ENCODE measurements at regions of chrX and their contacts with region 1.

Region 1: DNA sequence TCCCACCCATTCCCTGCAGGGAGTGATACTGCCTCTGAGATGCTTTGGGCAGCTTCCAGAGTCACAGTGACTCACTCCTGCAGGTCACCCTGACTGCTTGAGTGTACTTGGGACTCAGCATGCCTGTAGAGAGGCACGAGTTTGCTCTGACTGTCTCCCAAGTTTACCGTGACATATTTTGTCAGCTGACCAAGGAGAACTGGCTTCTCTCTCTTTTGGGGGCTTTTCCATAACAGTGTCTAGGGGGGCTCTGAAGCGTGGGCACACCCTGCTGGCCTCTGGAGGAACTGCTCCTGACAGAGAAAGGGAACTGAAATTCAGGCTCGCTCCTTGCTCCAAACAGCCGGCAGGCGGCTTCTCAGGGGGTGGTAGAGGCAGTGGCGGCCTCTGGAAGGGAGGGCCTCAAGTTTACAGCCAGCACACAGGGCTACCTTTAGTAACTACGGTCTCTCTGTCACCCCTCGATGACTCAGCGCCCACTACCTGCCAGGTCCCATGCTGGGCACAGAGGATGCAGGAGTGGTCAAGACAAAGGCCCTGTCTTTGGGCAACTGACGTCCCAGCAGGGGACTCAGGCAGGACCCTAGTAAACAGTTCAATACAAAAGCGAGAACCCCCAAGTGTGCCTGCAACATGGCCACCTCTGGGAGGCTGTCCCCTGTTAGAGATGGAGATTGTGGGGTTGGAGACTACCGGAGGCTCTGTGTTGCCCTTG is 17.8 kb downstream of the ZNF185 start:
- DNase-seq: peak; percentile 56 to 75 (median 71)
- H3K4me3 ChIP-seq: no peak overlapping the region
- H3K27ac ChIP-seq: no peak overlapping the region
- H3K4me1 ChIP-seq: peaks cover 0 to 67% (median 28%) of the 10 kb centered on the region in 4 experiments
- H3K27me3 ChIP-seq: no peaks in the 10 kb centered on the region

Region 2: GRCh38 chrX:152904151-152905080 is 11.3 kb before region 1 on chrX:
- CTCF ChIA-PET with region 1: interaction called, 44 read pairs
- POLR2A ChIA-PET with region 1: no interaction called
- DNase-seq: peak; percentile 36 to 59 (median 55)
- H3K4me3 ChIP-seq: no peak overlapping the region
- H3K27ac ChIP-seq: no peak overlapping the region
- H3K4me1 ChIP-seq: peaks cover 0 to 10% (median 0%) of the 10 kb centered on the region in 4 experiments
- H3K27me3 ChIP-seq: peaks cover 0 to 7% (median 0%) of the 10 kb centered on the region in 5 experiments

Region 3: GRCh38 chrX:152926279-152926678 is 10.6 kb after region 1 on chrX:
- CTCF ChIA-PET with region 1: interaction called, 73 read pairs
- POLR2A ChIA-PET with region 1: no interaction called
- DNase-seq: peak; percentile 75 to 88 (median 88)
- H3K4me3 ChIP-seq: no peak overlapping the region
- H3K27ac ChIP-seq: no peak overlapping the region
- H3K4me1 ChIP-seq: peaks cover 0 to 34% (median 11%) of the 10 kb centered on the region in 4 experiments
- H3K27me3 ChIP-seq: peaks cover 0 to 2% (median 0%) of the 10 kb centered on the region in 5 experiments

Measured in common myeloid progenitor, CD34-positive (primary cell).